ENCODE measurements at regions of chr17 and their contacts with region 1.

Region 1: GRCh38 chr17:78697554-78698343 is 84.3 kb downstream of the CYTH1 start:
- DNase-seq: no peak
- ATAC-seq: peak in 1 of 2 donors; percentile 53

Region 2: DNA sequence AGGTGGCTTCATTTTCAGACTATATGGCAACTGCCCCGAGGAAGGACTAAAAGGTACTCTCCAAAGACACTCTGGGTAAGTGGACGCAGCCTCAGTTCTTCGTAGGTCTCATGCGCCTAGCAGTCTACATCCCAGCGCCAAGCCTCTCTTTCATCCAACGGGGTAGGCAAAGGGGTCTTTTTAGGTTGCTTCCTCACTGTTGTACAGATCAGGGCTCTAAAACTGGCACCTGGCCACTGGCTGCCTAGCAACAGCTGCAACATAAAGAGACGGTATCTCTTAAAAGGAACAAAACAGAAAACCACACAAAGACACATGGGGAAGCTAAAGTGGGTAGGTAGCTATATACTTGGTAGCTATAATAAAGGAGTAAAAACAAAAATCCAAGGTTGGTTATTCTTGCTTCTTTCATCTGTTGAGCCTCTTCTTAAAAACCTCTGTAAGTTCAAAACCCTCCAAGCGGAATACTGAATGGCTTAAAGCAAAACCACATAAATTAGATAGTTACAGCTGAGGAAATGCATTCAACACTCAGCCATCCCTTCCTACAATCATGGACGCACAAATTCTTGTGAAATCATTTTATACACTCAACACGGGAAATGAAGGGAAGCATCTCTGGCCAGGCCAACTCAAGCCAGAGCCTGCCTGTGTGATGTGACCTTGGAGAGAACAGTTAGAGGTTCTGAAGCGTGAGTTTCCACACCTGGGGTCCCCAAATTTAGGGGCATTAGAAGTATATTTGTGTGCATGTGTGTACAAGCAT is 61.6 kb after region 1 on chr17:
- intact Hi-C with region 1: loop called in 1 of 2 experiments (anchors 10 kb)
- DNase-seq: peak; percentile 78
- ATAC-seq: peak; percentile 48 to 70

Measured in left cardiac atrium (tissue), 4 donors.